ENCODE measurements at regions of chr1 and their contacts with region 1.

Region 1: DNA sequence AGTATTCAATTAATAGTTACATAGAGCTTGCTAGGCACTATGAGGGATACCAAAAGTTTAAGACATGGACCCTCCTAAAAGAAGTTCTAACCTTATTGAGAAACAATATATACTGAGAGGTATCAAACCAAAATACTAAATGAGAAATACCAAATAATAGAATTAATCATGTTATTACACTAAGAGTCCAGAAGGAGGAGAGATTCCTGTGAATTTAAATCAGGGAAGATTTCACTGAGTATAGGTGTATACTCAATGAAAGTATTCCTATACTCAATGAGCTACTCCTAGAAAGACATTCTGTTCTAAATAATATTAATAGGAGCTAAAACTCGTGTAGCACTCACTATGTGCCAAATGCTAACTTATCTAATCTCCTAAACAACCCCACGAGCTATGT is 9.4 kb downstream of the CR1L start:
- DNase-seq: no peak
- H3K4me3 ChIP-seq: no peak overlapping the region
- H3K27me3 ChIP-seq: no peaks in the 10 kb centered on the region; the same call in 1 of the 2 replicates
- CTCF ChIP-seq: 0 out of 2 replicates have a peak, but pooled peaks have one; percentile 18

Region 2: GRCh38 chr1:207698822-207699483 is 44.6 kb after region 1 on chr1:
- CTCF ChIA-PET with region 1: interaction called, 12 read pairs
- POLR2A ChIA-PET with region 1: no interaction called
- DNase-seq: no peak
- H3K4me3 ChIP-seq: no peak overlapping the region
- H3K27me3 ChIP-seq: no peaks in the 10 kb centered on the region
- CTCF ChIP-seq: peak; percentile 75

Region 3: DNA sequence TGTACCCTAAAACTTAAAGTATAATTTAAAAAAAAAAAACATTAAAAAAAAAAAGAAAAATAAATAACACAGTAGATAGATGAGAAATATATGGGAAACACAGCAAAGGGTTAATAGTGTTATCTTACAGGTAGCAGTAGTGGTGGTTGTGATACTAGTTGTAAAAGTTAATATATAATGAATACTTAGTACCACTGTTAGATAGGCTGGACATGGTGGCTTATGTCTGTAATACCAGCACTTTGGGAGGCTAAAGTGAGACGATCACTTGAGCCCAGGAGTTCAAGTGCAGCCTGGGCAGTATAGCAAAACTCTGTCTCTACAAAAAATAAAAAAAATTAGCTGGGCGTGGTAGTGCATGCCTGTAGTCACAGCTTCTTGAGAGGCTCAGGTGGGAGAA is 64.9 kb after region 1 on chr1:
- CTCF ChIA-PET with region 1: no interaction called
- POLR2A ChIA-PET with region 1: no interaction called
- DNase-seq: no peak
- H3K4me3 ChIP-seq: no peak overlapping the region
- H3K27me3 ChIP-seq: no peaks in the 10 kb centered on the region
- CTCF ChIP-seq: no peak

Measured in BJ (cell line).